ENCODE measurements at regions of chr9 and their contacts with region 1.

Region 1: DNA sequence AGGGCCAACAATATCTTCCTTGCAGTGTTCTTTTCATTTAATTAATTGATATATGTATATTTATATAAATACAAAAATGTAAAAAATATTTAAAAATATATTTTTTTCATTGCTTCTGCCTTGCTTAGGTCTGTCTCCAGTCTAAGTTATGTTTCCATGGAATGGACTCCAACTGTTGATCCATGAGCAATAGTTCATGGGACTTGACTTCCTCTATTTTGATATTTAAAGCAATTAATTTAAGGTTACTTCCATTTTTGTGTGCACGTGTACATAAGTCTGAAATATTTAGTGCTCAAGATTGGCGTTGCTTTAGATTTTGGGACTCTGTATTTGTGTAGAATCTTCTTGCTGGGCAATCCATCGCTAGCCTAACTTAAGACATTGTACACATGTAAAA is 155.3 kb upstream of the KLF9 start:
- DNase-seq: no peak
- H3K4me3 ChIP-seq: no peak overlapping the region
- H3K4me3 Mint-ChIP-seq: no peak overlapping the region
- H3K27ac ChIP-seq: no peak overlapping the region
- H3K27ac Mint-ChIP-seq: no peak overlapping the region
- H3K4me1 ChIP-seq: peaks cover 13% of the 10 kb centered on the region
- H3K4me1 Mint-ChIP-seq: peaks cover 3 to 8% (median 6%) of the 10 kb centered on the region in 3 donors
- H3K27me3 ChIP-seq: no peaks in the 10 kb centered on the region
- H3K27me3 Mint-ChIP-seq: no peaks in the 10 kb centered on the region

Region 2: GRCh38 chr9:70594386-70594944 is 24.7 kb after region 1 on chr9:
- CTCF ChIA-PET with region 1: no interaction called
- POLR2A ChIA-PET with region 1: interaction called, 10 read pairs
- DNase-seq: no peak
- H3K4me3 ChIP-seq: no peak overlapping the region
- H3K4me3 Mint-ChIP-seq: no peak overlapping the region
- H3K27ac ChIP-seq: no peak overlapping the region
- H3K27ac Mint-ChIP-seq: no peak overlapping the region
- H3K4me1 ChIP-seq: no peaks in the 10 kb centered on the region
- H3K4me1 Mint-ChIP-seq: no peaks in the 10 kb centered on the region
- H3K27me3 ChIP-seq: no peaks in the 10 kb centered on the region
- H3K27me3 Mint-ChIP-seq: no peaks in the 10 kb centered on the region